HCT116 (cell line): ENCODE measurements at regions of chr15 and their contacts with region 1.

Region 1: GRCh38 chr15:67120839-67121643 is 55.6 kb downstream of the SMAD3 start:
- DNase-seq: no peak
- ATAC-seq: no peak
- H3K4me3 ChIP-seq: no peak overlapping the region
- H3K27ac ChIP-seq: peak overlapping the region; percentile 44
- H3K4me1 ChIP-seq: peaks cover 91 to 100% of the 10 kb centered on the region in 2 experiments
- H3K27me3 ChIP-seq: no peaks in the 10 kb centered on the region
- CTCF ChIP-seq: no peak
- POLR2A ChIP-seq: no peak
- RAD21 ChIP-seq: no peak

Region 2: DNA sequence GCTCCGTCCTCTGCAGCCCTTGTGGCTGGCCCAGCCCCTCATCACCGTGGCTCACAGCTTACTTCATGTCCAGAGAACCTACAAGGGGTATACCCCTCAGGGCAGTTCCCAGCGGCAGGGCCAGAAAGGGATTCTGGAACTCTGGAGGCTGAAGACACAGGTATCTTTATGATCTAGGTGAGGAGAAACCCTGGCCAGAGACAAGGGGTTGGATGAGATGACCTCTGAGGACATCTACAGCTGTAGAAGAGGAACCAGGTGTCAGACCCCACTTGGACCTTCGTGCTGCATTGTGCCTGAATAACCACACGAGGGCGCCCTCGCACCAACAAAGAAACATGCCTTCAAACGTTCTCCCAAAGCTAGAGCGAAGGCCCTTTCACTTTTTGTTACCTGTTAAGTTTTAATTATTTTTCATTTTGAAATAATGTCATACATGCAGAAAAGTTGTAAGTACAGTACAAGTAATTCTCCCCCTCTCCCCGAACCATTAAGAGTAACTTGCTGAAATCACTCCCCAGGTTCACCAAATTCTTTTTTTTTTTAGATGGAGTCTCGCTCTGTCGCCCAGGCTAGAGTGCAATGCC is 174.4 kb before region 1 on chr15:
- CTCF ChIA-PET with region 1: interaction called, 13 read pairs
- POLR2A ChIA-PET with region 1: no interaction called
- RAD21 ChIA-PET with region 1: interaction called in 1 of 2 experiments, 3 read pairs
- intact Hi-C with region 1: no loop called
- DNase-seq: peak; percentile 49
- ATAC-seq: peak; percentile 77
- H3K4me3 ChIP-seq: no peak overlapping the region
- H3K27ac ChIP-seq: no peak overlapping the region
- H3K4me1 ChIP-seq: peaks cover 6 to 26% of the 10 kb centered on the region in 2 experiments
- H3K27me3 ChIP-seq: no peaks in the 10 kb centered on the region
- CTCF ChIP-seq: peak; percentile 81 to 96 (median 87)
- POLR2A ChIP-seq: no peak
- RAD21 ChIP-seq: peak; percentile 98

Region 3: GRCh38 chr15:67065444-67066093 is 55.5 kb before region 1 on chr15 and contains the start of gene SMAD3:
- CTCF ChIA-PET with region 1: interaction called, 4 read pairs
- POLR2A ChIA-PET with region 1: interaction called, 12 read pairs
- RAD21 ChIA-PET with region 1: interaction called, 3 read pairs
- intact Hi-C with region 1: loop called (anchors 1 kb)
- DNase-seq: peak; percentile 89
- ATAC-seq: peak; percentile 77
- H3K4me3 ChIP-seq: peak within 1 kb of the TSS; percentile 81 to 90
- H3K27ac ChIP-seq: peak within 1 kb of the TSS; percentile 91
- H3K4me1 ChIP-seq: peaks cover 65 to 73% of the 10 kb centered on the region in 2 experiments
- H3K27me3 ChIP-seq: no peaks in the 10 kb centered on the region
- CTCF ChIP-seq: no peak
- POLR2A ChIP-seq: no peak
- RAD21 ChIP-seq: no peak
- total RNA-seq, gene SMAD3: 89.2 TPM

Region 4: DNA sequence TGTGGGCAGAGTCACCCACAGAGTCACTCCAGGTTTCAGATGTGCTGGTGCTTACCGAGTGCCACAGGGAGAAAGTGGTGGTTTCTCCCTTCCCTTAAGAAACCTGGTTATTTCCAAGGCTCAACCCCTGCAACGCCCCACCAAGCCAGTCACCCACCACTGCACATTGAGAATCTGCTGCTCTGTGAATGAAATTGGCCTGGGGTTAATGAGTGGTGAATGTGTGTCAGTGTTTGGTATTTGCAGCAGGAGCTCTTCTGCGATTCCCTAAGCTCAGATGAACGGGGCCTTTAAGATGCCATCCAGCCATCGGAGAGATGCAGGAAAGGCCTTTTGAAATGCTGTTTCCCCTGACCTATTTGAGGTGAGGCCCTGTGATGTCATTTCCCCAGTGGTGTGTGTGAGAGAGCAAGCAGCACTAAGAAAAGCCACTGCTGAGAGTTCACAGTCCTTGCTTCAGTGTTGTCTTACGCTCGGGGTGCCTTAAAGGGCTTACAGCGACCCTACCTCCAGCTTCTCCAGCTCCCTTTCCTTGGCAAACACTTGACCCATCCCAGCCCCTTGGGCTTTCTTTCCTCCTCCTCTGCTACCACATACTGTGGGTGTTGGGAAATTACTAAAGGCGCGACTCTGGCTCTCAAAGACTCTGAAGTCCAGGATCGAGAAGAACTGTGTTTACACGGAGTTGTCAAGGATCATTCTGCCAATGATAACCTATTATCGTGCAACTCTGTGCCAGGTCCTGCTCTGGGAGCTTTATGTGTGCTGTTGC is 13.2 kb after region 1 on chr15:
- CTCF ChIA-PET with region 1: no interaction called
- POLR2A ChIA-PET with region 1: interaction called, 13 read pairs
- RAD21 ChIA-PET with region 1: no interaction called
- intact Hi-C with region 1: no loop called
- DNase-seq: no peak
- ATAC-seq: peak; percentile 45
- H3K4me3 ChIP-seq: no peak overlapping the region
- H3K27ac ChIP-seq: no peak overlapping the region
- H3K4me1 ChIP-seq: peaks cover 50 to 94% of the 10 kb centered on the region in 2 experiments
- H3K27me3 ChIP-seq: no peaks in the 10 kb centered on the region
- CTCF ChIP-seq: no peak
- POLR2A ChIP-seq: no peak
- RAD21 ChIP-seq: no peak

Region 5: DNA sequence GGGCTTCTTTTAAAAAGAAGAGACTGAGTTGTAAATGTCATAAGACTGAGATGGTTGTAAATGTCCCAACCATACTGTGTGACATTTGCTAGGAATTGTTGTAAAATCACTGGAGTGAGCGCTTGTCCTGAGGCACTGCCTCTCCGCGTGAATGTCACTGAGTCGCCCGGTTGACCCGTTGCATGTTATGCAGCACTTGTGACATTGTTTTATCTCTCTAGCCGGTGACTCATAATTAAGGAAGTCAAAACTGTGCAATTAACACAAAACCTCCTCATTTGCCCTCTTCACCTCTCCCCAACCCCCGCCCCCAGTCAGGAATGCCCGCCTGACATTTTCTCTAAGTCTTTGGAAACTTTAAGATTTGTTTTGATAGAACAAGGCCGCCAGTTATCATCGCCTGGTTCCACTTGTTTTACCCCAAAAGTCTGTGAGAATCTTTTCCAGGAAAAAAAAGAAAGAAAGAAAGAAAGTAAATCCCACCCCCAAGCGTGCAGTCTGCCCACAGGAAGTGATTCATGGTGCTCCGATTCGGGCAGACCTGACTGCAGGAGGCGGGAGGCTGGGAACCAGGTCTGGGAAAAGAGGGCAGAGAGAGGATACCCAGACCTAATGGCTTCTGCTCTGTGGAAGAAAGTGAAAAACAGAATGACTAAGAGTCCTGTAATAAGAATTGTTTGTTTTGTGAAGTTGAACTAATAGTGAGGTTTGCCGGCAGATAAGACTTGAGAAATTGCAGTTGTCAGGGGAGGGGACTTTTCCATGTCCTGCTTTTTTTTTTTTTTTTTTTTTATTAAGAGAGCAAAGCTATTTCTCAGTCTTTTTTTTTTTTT is 29.2 kb after region 1 on chr15:
- CTCF ChIA-PET with region 1: interaction called, 3 read pairs
- POLR2A ChIA-PET with region 1: interaction called, 13 read pairs
- RAD21 ChIA-PET with region 1: no interaction called
- intact Hi-C with region 1: loop called (anchors 1 kb)
- DNase-seq: peak; percentile 96
- ATAC-seq: peak; percentile 85
- H3K4me3 ChIP-seq: peak overlapping the region; percentile 7 to 30
- H3K27ac ChIP-seq: peak overlapping the region; percentile 84
- H3K4me1 ChIP-seq: peaks cover 67 to 95% of the 10 kb centered on the region in 2 experiments
- H3K27me3 ChIP-seq: no peaks in the 10 kb centered on the region
- CTCF ChIP-seq: no peak
- POLR2A ChIP-seq: no peak
- RAD21 ChIP-seq: no peak